Activated B cell treated with CpG ODN at 0.5 μM for 24 hours (primary cell): ENCODE measurements at regions of chr19 and their contacts with region 1.

Region 1: DNA sequence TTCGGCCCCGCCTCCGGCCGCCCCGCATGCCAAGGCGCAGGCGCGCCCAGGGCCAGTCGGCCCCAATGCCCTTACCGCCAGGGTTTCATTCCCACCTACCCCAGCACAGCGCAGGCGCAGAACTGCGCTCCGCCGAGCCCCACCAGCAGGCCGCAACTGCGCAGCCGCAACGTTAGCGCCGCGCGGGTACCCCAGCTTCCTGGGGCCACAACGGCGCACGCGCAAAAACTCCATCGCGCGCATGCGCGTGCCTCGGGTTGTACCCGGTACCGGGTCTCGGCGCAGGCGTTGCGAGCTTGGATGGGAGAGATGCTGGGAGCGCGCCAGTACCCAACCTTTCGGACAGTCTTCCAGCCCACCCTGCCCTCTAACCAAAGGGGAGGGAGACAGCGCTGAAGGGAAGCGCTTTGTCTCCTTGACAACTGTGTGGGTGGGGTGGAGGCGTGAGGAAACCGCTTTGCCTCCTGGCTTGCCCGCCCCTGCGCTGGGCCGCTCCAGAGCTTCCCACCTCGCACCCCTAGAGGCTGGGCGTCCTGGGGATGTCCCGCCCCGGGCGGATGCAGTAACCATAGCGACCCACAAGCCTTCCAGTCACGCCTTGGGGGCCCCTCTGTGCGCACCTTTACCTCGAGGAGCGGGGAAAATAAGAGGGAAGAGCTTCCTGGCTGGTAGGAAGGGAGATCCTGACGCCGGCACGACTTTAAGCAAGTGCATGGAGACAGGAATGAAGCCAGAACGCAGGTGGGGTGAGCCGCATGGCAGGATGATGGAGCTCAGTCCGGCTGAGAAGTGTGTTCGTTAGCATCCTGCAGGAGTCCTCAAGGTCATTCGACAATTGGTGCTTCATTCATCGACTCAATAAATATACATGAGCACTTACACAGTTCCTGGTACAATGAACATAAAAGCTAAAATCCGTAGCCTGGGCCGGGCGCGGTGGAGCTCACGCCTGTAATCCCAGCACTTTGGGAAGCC is 525 bp upstream of the MYPOP start:
- DNase-seq: peak; percentile 99
- ATAC-seq: peak; percentile 82
- H3K4me3 Mint-ChIP-seq: peak overlapping the region; percentile 90
- H3K27ac Mint-ChIP-seq: peak overlapping the region; percentile 82
- H3K4me1 Mint-ChIP-seq: peaks cover 24% of the 10 kb centered on the region
- H3K27me3 Mint-ChIP-seq: no peaks in the 10 kb centered on the region
- CTCF ChIP-seq: no peak

Region 2: DNA sequence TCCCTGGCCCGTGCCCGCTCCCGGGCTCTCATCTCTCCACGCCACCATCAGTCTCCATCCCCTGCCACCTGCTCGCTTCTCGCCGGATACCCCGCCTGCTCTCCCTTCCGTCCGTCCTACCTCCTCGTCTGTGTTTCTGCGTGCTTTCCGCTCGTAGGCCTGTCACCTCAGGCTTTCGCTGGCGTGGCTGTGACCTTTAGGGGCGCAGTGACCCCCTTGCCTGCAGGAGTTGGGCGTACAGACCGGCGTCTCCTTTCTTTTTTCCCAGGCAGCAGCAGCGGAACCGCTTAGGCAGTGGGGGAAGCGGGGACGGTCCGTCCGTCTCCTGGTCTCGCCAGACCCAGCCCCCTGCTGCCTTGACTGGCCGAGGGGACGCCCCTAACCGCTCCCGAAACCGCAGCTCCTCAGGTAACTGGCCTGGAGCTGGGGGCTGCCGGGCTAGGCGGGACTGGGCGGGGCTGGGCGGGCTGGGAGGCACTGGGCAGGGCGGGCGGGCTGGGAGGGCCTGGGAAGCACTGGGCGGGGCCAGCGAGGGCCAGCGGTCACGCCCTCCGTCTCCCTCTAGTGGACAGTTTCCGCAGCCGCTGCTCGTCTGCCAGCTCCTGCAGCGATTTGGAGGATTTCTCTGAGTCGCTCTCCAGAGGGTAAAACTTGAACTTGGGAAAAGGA is 113.6 kb after region 1 on chr19:
- CTCF ChIA-PET with region 1: interaction called, 5 read pairs
- POLR2A ChIA-PET with region 1: interaction called, 4 read pairs
- intact Hi-C with region 1: loop called (anchors 2 kb)
- DNase-seq: peak; percentile 74
- ATAC-seq: peak; percentile 82
- H3K4me3 Mint-ChIP-seq: peak overlapping the region; percentile 85
- H3K27ac Mint-ChIP-seq: peak overlapping the region; percentile 8
- H3K4me1 Mint-ChIP-seq: peaks cover 19% of the 10 kb centered on the region
- H3K27me3 Mint-ChIP-seq: peaks cover 12% of the 10 kb centered on the region
- CTCF ChIP-seq: no peak

Region 3: GRCh38 chr19:46346821-46347571 is 444.1 kb after region 1 on chr19 and contains the start of gene PPP5C:
- CTCF ChIA-PET with region 1: no interaction called
- POLR2A ChIA-PET with region 1: no interaction called
- intact Hi-C with region 1: loop called (anchors 5 kb)
- DNase-seq: peak; percentile 84
- ATAC-seq: peak; percentile 81
- H3K4me3 Mint-ChIP-seq: peak within 1 kb of the TSS; percentile 95
- H3K27ac Mint-ChIP-seq: peak within 1 kb of the TSS; percentile 88
- H3K4me1 Mint-ChIP-seq: peaks cover 54% of the 10 kb centered on the region
- H3K27me3 Mint-ChIP-seq: peaks cover 3% of the 10 kb centered on the region
- CTCF ChIP-seq: no peak
- total RNA-seq, gene PPP5C: 49.1 and 57.7 TPM in 2 replicates